ENCODE measurements at regions of chr2 and their contacts with region 1.

Region 1: GRCh38 chr2:6826081-6826913 is 39.4 kb downstream of the CMPK2 start:
- DNase-seq: peak; percentile 52
- H3K4me3 Mint-ChIP-seq: no peak overlapping the region
- H3K27ac Mint-ChIP-seq: no peak overlapping the region
- H3K4me1 Mint-ChIP-seq: peaks cover 17% of the 10 kb centered on the region
- H3K27me3 Mint-ChIP-seq: peaks cover 3% of the 10 kb centered on the region

Region 2: GRCh38 chr2:6372317-6372901 is 453.9 kb before region 1 on chr2:
- intact Hi-C with region 1: no loop called
- DNase-seq: no peak
- H3K4me3 Mint-ChIP-seq: no peak overlapping the region
- H3K27ac Mint-ChIP-seq: no peak overlapping the region
- H3K4me1 Mint-ChIP-seq: no peaks in the 10 kb centered on the region
- H3K27me3 Mint-ChIP-seq: no peaks in the 10 kb centered on the region

Region 3: GRCh38 chr2:6865346-6866274 is 39.3 kb after region 1 on chr2 and contains the start of gene CMPK2:
- intact Hi-C with region 1: loop called (anchors 1 kb)
- DNase-seq: peak; percentile 90
- H3K4me3 Mint-ChIP-seq: peak within 1 kb of the TSS; percentile 99
- H3K27ac Mint-ChIP-seq: peak within 1 kb of the TSS; percentile 99
- H3K4me1 Mint-ChIP-seq: peaks cover 57% of the 10 kb centered on the region
- H3K27me3 Mint-ChIP-seq: no peaks in the 10 kb centered on the region
- total RNA-seq, gene CMPK2: 4.1 and 7.4 TPM in 2 replicates

Region 4: DNA sequence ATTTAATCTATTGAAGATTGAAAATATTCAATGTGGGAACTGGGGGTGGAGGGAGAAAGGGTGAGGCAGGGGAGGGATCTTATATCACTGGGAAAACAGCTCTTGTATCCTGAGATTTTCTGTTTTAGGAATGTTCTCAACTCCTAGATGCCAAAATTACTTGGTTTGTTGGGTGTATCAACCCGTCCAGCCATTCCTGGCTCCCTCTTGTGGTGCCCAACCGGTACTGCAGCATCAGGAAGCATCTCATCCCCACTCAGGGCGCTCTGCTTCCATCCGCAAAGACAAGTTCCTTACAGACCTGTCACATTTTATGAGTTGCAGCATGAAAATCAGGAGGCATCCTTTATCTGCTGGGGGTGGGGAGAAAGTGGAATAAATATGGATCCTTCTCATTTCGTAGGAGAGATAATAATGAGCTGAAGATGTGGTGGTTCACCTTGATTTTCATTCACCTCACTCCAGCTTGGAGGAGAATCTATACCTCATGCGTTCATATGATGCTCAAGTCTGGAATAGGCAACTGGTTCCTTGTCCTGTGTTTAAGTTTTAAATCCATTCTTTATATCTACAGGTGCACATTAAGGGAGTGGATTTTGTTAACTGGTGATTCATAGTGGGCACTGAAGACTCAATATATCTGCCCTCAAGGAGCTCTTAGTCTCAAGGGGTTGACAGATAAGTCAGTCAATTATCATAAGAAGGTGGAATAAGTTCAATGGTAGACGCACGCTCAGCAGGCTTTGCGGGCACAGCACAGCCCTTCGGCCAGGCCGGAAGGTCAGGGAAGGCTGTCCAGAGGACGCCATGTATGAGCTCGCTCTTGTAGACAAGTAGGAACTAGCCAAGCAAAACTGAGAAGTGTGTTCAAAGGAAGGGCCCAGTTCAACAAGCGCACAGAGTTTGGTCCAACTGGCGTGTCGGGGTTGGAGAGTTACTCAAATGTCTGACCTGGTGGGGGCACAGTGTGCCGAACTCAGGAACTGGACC is 218.3 kb after region 1 on chr2:
- intact Hi-C with region 1: loop called (anchors 1 kb)
- DNase-seq: peak; percentile 46
- H3K4me3 Mint-ChIP-seq: no peak overlapping the region
- H3K27ac Mint-ChIP-seq: no peak overlapping the region
- H3K4me1 Mint-ChIP-seq: peaks cover 5% of the 10 kb centered on the region
- H3K27me3 Mint-ChIP-seq: no peaks in the 10 kb centered on the region

Region 5: GRCh38 chr2:7083577-7084509 is 257.5 kb after region 1 on chr2:
- intact Hi-C with region 1: loop called (anchors 2 kb)
- DNase-seq: no peak
- H3K4me3 Mint-ChIP-seq: no peak overlapping the region
- H3K27ac Mint-ChIP-seq: no peak overlapping the region
- H3K4me1 Mint-ChIP-seq: no peaks in the 10 kb centered on the region
- H3K27me3 Mint-ChIP-seq: peaks cover 5% of the 10 kb centered on the region

Measured in activated T-helper 1 cell treated with anti-CD3 and anti-CD28 coated beads, Interleukin-12 subunit alpha, Interleukin-12 subunit beta, Interleukin-2, Interleukin-4 antibody, amounts not matched to agents 30 ng/mL and 10 ng/mL and 1 ng/mL, durations not matched to agents 14 hours and 24 hours and 36 hours (primary cell).